Testis (tissue), 5 donors: ENCODE measurements at regions of chr11 and their contacts with region 1.

Region 1: DNA sequence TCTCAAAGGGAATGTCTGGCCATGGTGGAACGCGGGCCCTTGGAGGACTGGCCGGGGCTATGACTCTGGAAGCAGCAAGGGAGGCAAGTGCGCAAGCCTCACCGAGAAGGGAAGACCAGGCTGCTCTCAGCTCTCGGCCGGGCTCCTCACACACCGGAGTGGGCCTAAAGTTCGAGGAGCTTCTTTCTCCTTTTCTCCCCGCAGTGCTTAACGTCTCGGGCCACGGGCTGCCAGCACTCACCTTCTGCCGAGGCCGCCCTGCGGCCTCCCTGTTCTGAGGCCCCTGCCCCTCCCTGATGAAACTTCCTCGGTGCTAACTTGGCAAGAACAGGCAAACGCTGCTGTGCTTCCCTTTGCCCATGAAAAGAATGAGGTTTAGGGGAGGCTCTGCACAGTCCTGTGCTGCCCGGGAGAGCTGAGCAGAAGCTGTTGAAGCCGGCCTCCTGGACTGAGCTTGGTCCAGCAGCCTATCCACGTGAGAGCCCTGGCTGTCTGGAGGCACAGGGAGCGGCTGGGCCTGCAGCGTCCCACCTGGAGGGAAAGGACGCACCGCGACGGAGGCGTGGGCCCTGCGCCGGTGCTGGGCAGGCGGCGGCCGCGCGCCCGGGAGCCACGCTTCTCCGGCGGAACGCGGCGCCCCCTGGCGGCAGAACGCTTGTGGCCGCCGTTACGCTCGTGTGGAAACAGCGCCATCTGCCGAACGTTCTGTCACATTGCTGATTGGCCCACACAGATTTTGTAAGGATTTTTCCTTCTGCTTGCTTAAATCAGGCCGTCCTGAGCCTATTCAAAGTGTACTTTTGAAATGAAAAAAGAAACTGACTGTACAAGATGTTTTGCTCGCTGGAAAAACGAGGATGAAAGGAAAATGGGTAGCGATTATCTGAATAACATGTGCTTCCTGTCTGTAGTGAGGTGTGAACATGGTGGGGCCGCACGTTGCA is 65.0 kb upstream of the TMEM45B start:
- DNase-seq: peak; percentile 83
- H3K4me3 ChIP-seq: peak overlapping the region; percentile 29 to 47
- H3K27ac ChIP-seq: no peak overlapping the region
- H3K4me1 ChIP-seq: no peaks in the 10 kb centered on the region
- H3K27me3 ChIP-seq: no peaks in the 10 kb centered on the region
- CTCF ChIP-seq: peak; percentile 99 to 100 (median 100)
- POLR2A ChIP-seq: no peak

Region 2: DNA sequence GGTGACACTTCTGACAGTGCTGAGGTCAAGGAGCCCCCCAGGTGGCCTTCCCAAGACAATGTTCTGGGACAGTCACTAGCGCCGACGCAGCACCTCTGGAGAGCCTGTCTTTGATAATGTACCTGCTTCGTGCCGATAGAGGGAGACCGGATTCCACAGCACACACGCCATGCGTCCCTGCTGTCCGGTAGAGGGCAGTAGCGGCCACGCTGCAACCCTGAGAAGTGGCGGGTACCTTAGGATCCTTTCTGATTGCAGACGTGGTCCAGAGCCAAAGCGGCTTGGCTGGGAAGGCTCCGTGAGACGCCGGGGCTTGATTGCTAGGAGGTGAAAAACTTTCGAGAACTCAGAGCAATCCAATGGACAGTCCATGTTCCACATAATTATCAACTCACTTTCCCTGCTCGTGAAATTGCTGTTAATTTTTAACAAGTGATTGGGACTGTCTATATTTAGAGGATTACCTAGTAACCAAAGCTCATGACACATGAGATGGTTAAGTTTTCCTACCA is 386.4 kb before region 1 on chr11:
- intact Hi-C with region 1: loop called (anchors 10 kb)
- DNase-seq: peak; percentile 88
- H3K4me3 ChIP-seq: no peak overlapping the region
- H3K27ac ChIP-seq: no peak overlapping the region
- H3K4me1 ChIP-seq: no peaks in the 10 kb centered on the region
- H3K27me3 ChIP-seq: no peaks in the 10 kb centered on the region
- CTCF ChIP-seq: peak; percentile 74 to 79 (median 79)
- POLR2A ChIP-seq: no peak

Region 3: GRCh38 chr11:129911298-129911697 is 160.7 kb after region 1 on chr11:
- intact Hi-C with region 1: no loop called
- DNase-seq: no peak
- H3K4me3 ChIP-seq: no peak overlapping the region
- H3K27ac ChIP-seq: no peak overlapping the region
- H3K4me1 ChIP-seq: no peaks in the 10 kb centered on the region
- H3K27me3 ChIP-seq: no peaks in the 10 kb centered on the region
- CTCF ChIP-seq: no peak
- POLR2A ChIP-seq: no peak